ENCODE measurements at regions of chr2 and their contacts with region 1.

Region 1: DNA sequence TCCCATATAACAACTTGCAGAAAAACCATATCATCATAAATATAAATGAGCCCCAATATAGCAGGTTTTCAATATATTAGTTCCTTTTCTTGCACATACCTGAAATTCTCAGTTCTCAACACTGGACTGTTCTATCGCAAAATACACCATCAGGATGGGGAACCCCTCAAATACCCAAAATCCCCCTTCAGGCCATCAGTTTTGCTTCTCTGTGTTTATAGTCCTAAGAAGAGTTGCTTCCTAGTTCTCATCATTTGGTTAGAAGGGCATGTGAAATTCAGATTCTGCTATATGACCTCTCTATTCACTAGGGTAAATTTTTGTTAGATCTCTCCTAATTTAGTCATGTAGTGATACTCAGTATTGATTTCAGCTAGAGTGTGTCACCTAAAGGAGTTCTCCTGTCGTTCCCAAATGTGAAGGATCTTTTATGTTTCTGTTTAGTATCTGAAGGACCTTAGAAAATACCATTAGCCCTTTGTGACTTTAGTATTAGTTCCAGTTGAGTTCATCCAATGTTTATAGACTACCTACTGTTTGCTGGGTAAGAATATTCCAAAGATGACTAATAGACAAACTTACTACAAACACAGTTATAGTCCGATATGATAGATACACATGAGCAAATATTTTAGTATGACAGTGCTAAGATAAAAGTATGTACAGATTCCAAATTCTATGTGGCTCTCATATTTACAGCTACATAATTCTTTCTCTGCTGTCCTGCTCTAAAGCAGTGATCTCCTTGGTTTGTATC is 115.8 kb downstream of the TTC27 start:
- H3K4me3 Mint-ChIP-seq: no peak overlapping the region
- H3K27ac Mint-ChIP-seq: no peak overlapping the region
- H3K4me1 Mint-ChIP-seq: no peaks in the 10 kb centered on the region
- H3K27me3 Mint-ChIP-seq: no peaks in the 10 kb centered on the region

Region 2: DNA sequence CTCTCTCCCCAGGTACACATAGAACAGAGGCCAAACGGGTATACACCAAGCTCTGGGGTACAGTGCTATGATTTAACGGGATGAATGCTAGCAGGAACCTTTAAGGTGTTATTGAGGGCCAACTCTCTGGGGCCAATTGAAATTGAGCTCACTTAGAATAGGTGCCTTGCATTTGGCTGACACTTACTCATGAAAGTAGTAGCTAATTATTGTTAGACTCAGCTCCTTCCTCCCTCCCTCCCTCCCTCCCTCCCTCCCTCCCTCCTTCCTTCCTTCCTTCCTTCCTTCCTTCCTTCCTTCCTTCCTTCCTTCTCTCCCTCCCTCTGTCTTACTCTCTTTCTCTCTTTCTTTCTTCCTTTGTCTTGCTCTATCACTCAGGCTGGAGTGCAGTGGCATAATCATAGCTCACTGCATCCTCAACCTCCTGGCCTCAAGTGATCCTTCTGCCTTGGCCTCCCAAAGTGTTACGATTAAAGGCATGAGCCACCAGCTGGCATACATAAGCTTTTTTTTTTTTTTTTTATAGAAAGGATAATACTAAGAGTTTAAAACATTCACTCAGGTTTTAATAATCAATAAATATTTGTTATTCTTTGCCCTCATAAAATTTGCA is 20.1 kb before region 1 on chr2:
- intact Hi-C with region 1: loop called (anchors 2 kb)
- H3K4me3 Mint-ChIP-seq: no peak overlapping the region
- H3K27ac Mint-ChIP-seq: no peak overlapping the region
- H3K4me1 Mint-ChIP-seq: no peaks in the 10 kb centered on the region
- H3K27me3 Mint-ChIP-seq: no peaks in the 10 kb centered on the region